Caco-2 (cell line): ENCODE measurements at regions of chr5 and their contacts with region 1.

Region 1: GRCh38 chr5:173615884-173616576 is 420 bp downstream of the BOD1 start:
- DNase-seq: peak; percentile 75 to 84
- H3K4me3 ChIP-seq: peak overlapping the region; percentile 90
- H3K4me3 Mint-ChIP-seq: peak overlapping the region; percentile 89
- H3K27ac Mint-ChIP-seq: peak overlapping the region; percentile 94
- H3K4me1 ChIP-seq: peaks cover 20% of the 10 kb centered on the region
- H3K4me1 Mint-ChIP-seq: peaks cover 23% of the 10 kb centered on the region
- H3K27me3 ChIP-seq: no peaks in the 10 kb centered on the region
- H3K27me3 Mint-ChIP-seq: no peaks in the 10 kb centered on the region
- CTCF ChIP-seq: peak; percentile 61 to 64

Region 2: GRCh38 chr5:173293817-173294672 is 322.0 kb before region 1 on chr5:
- CTCF ChIA-PET with region 1: interaction called, 13 read pairs
- POLR2A ChIA-PET with region 1: no interaction called
- intact Hi-C with region 1: no loop called
- DNase-seq: peak; percentile 82 to 88
- H3K4me3 ChIP-seq: no peak overlapping the region
- H3K4me3 Mint-ChIP-seq: peak overlapping the region; percentile 62
- H3K27ac Mint-ChIP-seq: peak overlapping the region; percentile 44
- H3K4me1 ChIP-seq: peaks cover 35% of the 10 kb centered on the region
- H3K4me1 Mint-ChIP-seq: peaks cover 20% of the 10 kb centered on the region
- H3K27me3 ChIP-seq: no peaks in the 10 kb centered on the region; the same call in 1 of the 2 replicates
- H3K27me3 Mint-ChIP-seq: no peaks in the 10 kb centered on the region
- CTCF ChIP-seq: peak; percentile 92 to 93

Region 3: DNA sequence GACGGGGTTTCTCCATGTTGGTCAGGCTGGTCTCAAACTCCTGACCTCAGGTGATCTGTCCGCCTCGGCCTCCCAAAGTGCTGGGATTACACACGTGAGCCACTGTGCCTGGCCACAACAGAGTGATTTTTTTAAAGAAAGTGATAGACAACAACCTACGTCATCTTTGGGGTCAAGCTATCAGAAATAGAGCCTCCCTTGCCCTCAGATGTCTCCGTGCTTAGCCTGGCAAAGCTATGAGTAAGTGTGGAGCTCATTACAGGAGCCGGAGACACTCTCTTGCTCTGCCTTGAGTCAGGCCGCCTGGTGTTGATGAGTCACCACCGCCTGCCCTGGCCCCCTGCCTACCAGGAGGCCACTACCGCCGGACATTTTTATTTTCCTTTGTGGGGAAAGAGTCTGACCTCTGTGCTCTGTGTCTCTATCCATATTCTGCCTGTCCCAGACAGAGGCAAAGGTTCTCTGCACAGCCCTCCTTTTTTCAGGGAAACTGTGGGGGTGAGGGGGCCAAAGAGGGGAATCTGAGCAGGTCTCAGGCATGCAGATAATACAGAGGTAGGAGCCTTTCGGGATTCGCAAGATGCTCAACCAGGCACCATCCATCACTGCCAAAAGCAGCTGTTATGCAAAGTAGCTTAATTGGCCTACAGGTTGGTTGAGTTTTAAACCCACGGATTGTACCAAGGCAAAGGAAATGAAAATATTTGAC is 148.4 kb after region 1 on chr5:
- CTCF ChIA-PET with region 1: interaction called, 4 read pairs
- POLR2A ChIA-PET with region 1: no interaction called
- intact Hi-C with region 1: loop called (anchors 2 kb)
- DNase-seq: peak; percentile 42 to 70
- H3K4me3 ChIP-seq: no peak overlapping the region
- H3K4me3 Mint-ChIP-seq: no peak overlapping the region
- H3K27ac Mint-ChIP-seq: no peak overlapping the region
- H3K4me1 ChIP-seq: peaks cover 40% of the 10 kb centered on the region
- H3K4me1 Mint-ChIP-seq: peaks cover 20% of the 10 kb centered on the region
- H3K27me3 ChIP-seq: no peaks in the 10 kb centered on the region
- H3K27me3 Mint-ChIP-seq: no peaks in the 10 kb centered on the region
- CTCF ChIP-seq: no peak

Region 4: DNA sequence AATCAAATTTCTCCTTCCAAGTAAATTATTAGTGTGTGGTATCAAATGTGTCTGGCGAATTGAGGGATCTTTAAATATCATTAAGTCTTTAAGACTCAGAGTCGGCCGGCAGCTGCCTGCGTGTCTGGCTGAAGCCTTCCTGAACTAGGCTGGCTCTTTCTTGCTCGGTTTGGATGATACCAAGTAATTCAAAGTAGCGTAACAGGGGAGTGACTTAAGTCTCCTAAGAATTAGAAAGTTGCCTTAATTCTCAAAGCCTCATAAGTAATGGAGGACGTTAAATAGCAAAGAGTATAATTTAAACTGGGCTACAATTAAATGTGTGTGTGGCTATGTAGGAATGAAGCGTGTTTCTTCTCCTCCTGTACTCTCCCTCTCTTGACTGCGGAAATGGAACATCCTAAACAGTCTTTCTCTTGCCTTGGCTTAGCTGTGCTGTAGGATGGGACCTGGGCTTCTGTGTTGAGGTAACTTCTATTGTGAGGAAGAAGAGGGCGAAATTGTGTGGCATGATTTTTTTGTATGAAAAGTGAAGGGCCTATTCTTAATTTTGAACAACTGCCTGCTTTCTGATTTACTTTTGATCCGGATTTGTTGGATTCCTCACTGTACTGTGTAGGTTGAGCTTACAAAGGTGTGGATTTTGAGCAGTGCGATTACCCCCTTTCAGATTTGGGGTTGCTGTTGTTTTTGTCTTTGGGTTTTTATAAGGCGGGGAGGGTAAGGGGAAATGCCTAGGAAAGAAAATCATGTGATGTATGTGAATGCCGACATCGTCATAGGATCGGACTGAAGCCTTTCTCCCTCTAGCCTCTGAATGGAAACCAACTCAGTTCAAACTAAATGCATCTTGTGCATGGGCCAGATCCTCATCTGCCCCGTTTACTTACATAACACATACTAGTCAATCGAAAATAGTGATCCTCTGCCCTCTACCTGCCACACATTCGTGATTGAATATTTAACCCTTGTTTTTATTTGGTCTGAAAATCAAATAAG is 302.1 kb after region 1 on chr5:
- CTCF ChIA-PET with region 1: no interaction called
- POLR2A ChIA-PET with region 1: no interaction called
- intact Hi-C with region 1: loop called (anchors 1 kb)
- DNase-seq: peak; percentile 68 to 74
- H3K4me3 ChIP-seq: peak overlapping the region; percentile 31
- H3K4me3 Mint-ChIP-seq: no peak overlapping the region
- H3K27ac Mint-ChIP-seq: no peak overlapping the region
- H3K4me1 ChIP-seq: peaks cover 12% of the 10 kb centered on the region
- H3K4me1 Mint-ChIP-seq: no peaks in the 10 kb centered on the region
- H3K27me3 ChIP-seq: no peaks in the 10 kb centered on the region
- H3K27me3 Mint-ChIP-seq: no peaks in the 10 kb centered on the region
- CTCF ChIP-seq: no peak

Region 5: GRCh38 chr5:173972925-173973615 is 357.0 kb after region 1 on chr5:
- CTCF ChIA-PET with region 1: interaction called, 18 read pairs
- POLR2A ChIA-PET with region 1: interaction called, 9 read pairs
- intact Hi-C with region 1: loop called (anchors 1 kb)
- DNase-seq: peak; percentile 87 to 89
- H3K4me3 ChIP-seq: peak overlapping the region; percentile 42
- H3K4me3 Mint-ChIP-seq: peak overlapping the region; percentile 74
- H3K27ac Mint-ChIP-seq: peak overlapping the region; percentile 80
- H3K4me1 ChIP-seq: peaks cover 56% of the 10 kb centered on the region
- H3K4me1 Mint-ChIP-seq: peaks cover 28% of the 10 kb centered on the region
- H3K27me3 ChIP-seq: no peaks in the 10 kb centered on the region
- H3K27me3 Mint-ChIP-seq: no peaks in the 10 kb centered on the region
- CTCF ChIP-seq: peak; percentile 88 to 89

Region 6: DNA sequence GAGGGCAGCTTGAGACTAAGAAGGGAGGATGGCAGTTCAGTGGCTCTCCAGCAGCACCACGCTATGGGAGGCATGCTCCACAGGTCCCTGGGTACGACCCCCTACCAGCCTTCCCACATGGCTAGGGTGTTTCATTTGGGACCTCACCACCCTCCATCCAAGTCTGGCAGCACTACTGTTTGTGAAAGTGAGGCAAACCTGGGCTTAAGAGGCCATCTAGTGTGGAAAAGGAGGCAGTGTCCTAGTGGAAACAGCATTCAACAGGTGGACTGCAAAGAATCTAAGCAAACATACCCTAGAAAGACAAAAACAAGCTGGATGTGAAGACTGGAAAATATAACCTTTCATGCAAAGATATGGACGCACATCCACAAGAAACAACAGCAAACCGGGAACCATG is 368.2 kb after region 1 on chr5:
- CTCF ChIA-PET with region 1: interaction called, 6 read pairs
- POLR2A ChIA-PET with region 1: no interaction called
- intact Hi-C with region 1: loop called (anchors 1 kb)
- DNase-seq: peak in 1 of 2 experiments; percentile 57
- H3K4me3 ChIP-seq: no peak overlapping the region
- H3K4me3 Mint-ChIP-seq: no peak overlapping the region
- H3K27ac Mint-ChIP-seq: no peak overlapping the region
- H3K4me1 ChIP-seq: no peaks in the 10 kb centered on the region
- H3K4me1 Mint-ChIP-seq: no peaks in the 10 kb centered on the region
- H3K27me3 ChIP-seq: no peaks in the 10 kb centered on the region
- H3K27me3 Mint-ChIP-seq: peaks cover 3% of the 10 kb centered on the region
- CTCF ChIP-seq: peak; percentile 70 to 79